ENCODE measurements at regions of chr10 and their contacts with region 1.

Region 1: GRCh38 chr10:34666008-34666705 is 148.9 kb downstream of the PARD3 start:
- DNase-seq: peak; percentile 88
- H3K4me3 ChIP-seq: no peak overlapping the region
- H3K27ac ChIP-seq: no peak overlapping the region
- H3K4me1 ChIP-seq: no peaks in the 10 kb centered on the region
- H3K27me3 ChIP-seq: no peaks in the 10 kb centered on the region
- CTCF ChIP-seq: peak; percentile 73

Region 2: DNA sequence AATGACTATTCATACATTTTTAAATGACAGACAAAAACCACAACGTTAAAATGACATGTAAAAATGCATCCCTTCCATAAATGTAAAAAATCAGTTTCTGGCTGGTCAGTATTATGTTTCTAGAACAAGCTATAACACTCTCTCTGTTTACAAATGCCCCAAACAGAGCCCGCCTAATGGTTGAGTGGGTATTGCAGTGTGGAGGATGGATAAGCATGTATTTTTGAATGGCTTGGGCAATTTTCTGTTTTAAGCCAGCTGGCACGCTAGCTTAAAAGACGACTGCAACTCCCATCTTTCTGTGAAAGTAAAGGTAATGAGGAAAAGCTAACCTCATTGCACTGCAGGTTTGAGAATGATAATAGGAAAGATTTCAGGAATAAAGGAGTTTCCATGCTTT is 281.8 kb before region 1 on chr10:
- CTCF ChIA-PET with region 1: no interaction called
- POLR2A ChIA-PET with region 1: no interaction called
- intact Hi-C with region 1: no loop called
- DNase-seq: no peak
- H3K4me3 ChIP-seq: no peak overlapping the region
- H3K27ac ChIP-seq: no peak overlapping the region
- H3K4me1 ChIP-seq: peaks cover 3% of the 10 kb centered on the region
- H3K27me3 ChIP-seq: no peaks in the 10 kb centered on the region
- CTCF ChIP-seq: no peak

Region 3: DNA sequence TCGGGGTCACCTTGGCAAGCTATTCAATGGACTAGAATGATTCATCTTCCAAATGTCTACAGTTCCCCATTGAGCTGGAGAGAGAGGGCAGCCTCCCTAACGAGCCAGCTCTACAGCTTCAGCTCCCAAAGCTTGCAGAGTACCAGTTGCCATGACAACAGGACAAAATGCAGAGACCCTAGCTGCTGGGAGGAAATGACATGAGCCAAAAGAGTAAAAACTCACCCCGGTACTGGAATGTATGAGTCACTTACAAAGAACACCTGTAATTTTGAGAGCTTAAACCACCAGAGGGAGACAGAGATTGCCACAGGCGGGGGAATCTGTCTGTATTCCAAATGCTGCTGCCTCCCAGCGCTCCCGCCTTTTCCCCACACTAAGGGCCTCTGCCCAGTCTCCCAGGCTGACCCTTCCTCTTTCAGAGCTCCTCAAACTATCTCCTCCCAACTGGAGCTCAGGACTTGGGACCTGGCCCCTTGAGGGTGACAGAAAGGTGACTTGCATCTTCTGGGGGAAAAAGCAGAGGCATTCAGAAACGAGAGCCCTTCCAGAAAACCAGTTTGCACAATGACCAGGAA is 328.5 kb after region 1 on chr10:
- CTCF ChIA-PET with region 1: interaction called, 4 read pairs
- POLR2A ChIA-PET with region 1: no interaction called
- intact Hi-C with region 1: loop called (anchors 10 kb)
- DNase-seq: peak; percentile 77
- H3K4me3 ChIP-seq: no peak overlapping the region
- H3K27ac ChIP-seq: no peak overlapping the region
- H3K4me1 ChIP-seq: no peaks in the 10 kb centered on the region
- H3K27me3 ChIP-seq: no peaks in the 10 kb centered on the region
- CTCF ChIP-seq: peak; percentile 80

Region 4: GRCh38 chr10:35027567-35027966 is 361.4 kb after region 1 on chr10:
- CTCF ChIA-PET with region 1: interaction called, 7 read pairs
- POLR2A ChIA-PET with region 1: no interaction called
- intact Hi-C with region 1: loop called (anchors 5 kb)
- DNase-seq: peak; percentile 25
- H3K4me3 ChIP-seq: no peak overlapping the region
- H3K27ac ChIP-seq: no peak overlapping the region
- H3K4me1 ChIP-seq: no peaks in the 10 kb centered on the region
- H3K27me3 ChIP-seq: no peaks in the 10 kb centered on the region
- CTCF ChIP-seq: peak; percentile 59